Colonic mucosa (tissue), 4 donors: ENCODE measurements at regions of chr3 and their contacts with region 1.

Region 1: DNA sequence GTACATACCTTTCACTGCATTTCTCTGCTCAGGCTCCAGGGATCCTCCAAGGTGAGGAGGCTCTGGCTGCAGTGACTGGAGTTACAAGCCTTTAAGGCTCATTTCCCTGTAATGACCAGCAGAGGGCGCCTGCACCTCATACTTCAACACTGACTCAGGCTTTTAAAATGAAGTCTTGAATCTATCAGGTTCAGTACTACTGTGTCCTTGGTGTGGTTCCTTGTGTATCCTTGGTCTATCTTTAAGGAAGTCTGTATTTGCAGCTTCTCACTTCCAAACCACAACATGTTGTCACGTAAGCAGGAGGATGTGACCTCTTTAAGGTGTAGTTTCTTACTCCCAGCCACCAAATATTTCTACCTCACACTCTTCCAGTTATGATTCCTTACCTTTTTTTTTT is 122.5 kb upstream of the ZBED2 start:
- DNase-seq: peak; percentile 70
- H3K4me3 ChIP-seq: no peak overlapping the region
- H3K27ac ChIP-seq: no peak overlapping the region
- H3K4me1 ChIP-seq: no peaks in the 10 kb centered on the region
- H3K27me3 ChIP-seq: no peaks in the 10 kb centered on the region
- CTCF ChIP-seq: peak; percentile 87

Region 2: GRCh38 chr3:111215481-111215880 is 502.1 kb before region 1 on chr3:
- intact Hi-C with region 1: no loop called
- DNase-seq: no peak
- H3K4me3 ChIP-seq: no peak overlapping the region
- H3K27ac ChIP-seq: no peak overlapping the region
- H3K4me1 ChIP-seq: no peaks in the 10 kb centered on the region
- H3K27me3 ChIP-seq: no peaks in the 10 kb centered on the region
- CTCF ChIP-seq: no peak

Region 3: DNA sequence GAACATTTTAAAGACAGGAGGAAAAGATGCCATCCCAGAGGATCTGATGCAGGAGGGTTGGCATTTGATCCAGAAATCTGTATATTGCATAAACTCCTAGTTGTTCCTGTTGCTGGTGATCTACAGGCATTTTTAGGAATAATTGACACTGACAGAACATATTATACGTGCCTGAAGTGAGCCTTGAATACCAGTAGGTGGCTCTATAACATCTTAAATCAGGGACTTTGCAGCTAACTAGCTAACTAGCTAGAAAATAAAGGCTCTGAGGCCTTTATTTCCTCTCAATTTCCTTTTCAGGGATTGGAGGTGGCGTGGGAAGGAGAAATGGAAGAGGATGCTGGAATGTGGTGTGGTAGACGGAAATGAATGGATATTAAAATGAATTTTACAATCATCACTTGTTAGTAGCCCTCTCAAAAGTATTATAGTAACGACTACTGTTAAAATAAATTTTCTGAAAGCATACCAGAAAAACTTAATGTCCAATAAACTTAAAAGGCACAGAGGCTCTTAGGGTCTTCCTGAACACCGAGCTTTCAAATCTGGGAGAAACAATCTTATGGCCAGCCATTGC is 48.6 kb before region 1 on chr3:
- intact Hi-C with region 1: loop called (anchors 5 kb)
- DNase-seq: no peak
- H3K4me3 ChIP-seq: no peak overlapping the region
- H3K27ac ChIP-seq: no peak overlapping the region
- H3K4me1 ChIP-seq: peaks cover 4% of the 10 kb centered on the region
- H3K27me3 ChIP-seq: no peaks in the 10 kb centered on the region
- CTCF ChIP-seq: peak; percentile 76

Region 4: DNA sequence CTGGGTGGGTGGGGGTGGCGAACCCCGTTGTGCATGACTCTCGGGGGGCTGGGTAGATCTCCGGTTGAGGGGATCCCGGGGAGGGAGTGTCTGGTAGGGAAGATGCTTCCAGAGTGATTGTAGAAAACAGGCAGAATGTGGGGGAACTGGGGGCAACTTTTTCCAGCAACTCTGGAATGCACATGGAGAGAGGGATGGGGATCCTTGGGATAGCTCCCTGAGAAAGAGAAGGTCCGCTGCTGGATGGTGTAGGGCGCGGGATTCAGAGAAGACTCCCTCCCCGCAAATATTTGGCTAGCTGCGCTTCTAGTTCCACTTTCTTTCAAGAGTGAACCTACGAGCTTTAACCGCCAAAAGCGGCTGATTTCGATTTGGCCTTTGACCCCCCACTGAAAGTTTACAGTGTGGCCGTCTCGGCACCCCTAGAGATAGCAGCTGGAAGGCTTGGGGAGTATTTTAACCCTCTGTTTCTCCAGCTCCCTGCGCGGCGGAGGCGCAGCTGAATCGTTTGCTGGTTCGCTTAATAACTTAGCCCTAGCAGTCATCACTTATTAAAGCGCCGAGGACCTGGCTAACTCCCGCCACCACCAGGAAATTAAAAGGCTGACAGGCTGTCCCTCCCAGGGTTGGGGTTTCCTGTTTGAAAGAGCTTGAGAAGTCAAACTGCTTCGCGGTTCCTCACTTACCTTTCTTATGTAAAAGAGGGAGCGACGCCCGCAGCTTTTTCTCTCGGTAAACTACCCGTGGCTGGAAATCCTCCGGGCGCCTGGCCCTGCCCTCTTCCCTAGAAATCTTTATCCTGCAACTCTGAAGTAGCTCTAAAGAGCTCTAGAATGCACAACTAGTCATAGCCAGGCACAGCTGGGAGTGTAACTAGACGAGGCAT is 142.6 kb after region 1 on chr3:
- intact Hi-C with region 1: loop called (anchors 10 kb)
- DNase-seq: peak; percentile 66
- H3K4me3 ChIP-seq: peak overlapping the region; percentile 50
- H3K27ac ChIP-seq: peak overlapping the region; percentile 83
- H3K4me1 ChIP-seq: no peaks in the 10 kb centered on the region
- H3K27me3 ChIP-seq: no peaks in the 10 kb centered on the region
- CTCF ChIP-seq: peak; percentile 27

Region 5: GRCh38 chr3:111967651-111968274 is 250.2 kb after region 1 on chr3:
- intact Hi-C with region 1: loop called (anchors 2 kb)
- DNase-seq: peak; percentile 92
- H3K4me3 ChIP-seq: no peak overlapping the region
- H3K27ac ChIP-seq: no peak overlapping the region
- H3K4me1 ChIP-seq: no peaks in the 10 kb centered on the region
- H3K27me3 ChIP-seq: no peaks in the 10 kb centered on the region
- CTCF ChIP-seq: peak; percentile 90